ENCODE measurements at regions of chr3 and their contacts with region 1.

Region 1: DNA sequence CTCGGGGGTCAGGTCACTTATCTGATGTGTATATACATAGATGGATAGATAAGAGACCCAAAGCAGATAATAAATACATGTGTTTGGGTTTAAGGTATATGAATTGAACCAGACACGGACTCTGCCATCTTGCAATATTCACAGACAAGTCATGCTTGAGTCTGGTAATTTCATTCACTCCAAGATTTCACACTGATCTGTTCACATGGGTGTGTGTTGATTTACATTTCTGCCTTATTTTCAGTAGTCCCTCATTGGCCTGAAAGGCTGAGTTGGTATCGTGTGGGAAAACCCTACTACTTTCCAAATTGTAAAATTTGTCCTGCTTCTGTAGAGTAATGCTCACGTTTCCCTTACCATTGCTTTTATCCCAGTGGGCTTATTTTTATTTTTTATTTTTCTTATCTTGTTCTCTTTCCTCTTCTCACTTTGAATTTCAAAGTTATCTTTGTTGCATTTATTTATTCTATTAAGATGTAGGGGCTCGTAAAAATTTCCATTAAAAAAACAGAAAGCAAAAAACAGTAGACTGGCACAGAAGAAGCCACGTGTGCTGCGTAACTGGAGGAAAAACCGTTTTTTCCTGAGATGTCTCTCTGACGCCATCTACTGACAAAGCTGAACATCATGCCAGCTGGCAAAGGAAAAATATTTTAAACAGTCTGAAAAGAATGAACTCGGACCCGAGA is 10.8 kb upstream of the MFSD1 start:
- DNase-seq: no peak
- H3K4me3 ChIP-seq: no peak overlapping the region
- H3K27ac ChIP-seq: no peak overlapping the region
- H3K4me1 ChIP-seq: peaks cover 4% of the 10 kb centered on the region
- H3K27me3 ChIP-seq: no peaks in the 10 kb centered on the region
- CTCF ChIP-seq: peak; percentile 59 to 80 (median 74)
- POLR2A ChIP-seq: no peak

Region 2: DNA sequence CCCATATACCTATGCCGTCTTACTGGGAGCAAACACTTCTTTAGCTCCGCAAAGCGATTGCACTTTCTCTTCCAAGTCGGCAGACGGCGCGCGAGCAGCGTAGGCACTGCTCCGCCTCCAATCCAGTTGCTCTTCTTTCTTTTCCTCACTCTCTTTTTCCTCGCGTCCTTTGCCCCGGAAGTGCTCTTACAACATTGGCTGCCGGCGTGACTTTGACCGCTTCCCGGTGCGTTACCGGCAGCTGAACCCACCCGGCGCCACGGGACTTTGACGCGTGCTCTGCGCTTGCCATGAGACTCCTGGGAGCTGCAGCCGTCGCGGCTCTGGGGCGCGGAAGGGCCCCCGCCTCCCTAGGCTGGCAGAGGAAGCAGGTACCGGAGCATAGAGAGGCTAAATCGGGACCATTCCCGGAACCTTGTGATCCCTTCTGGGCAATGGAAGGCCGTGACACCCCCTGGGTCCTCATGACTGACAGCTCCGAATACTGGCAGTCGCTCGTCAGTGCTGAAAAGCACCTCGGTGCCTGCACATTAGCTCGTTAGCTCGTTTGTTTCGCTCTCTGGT is 146.6 kb before region 1 on chr3 and contains the start of gene GFM1:
- intact Hi-C with region 1: no loop called
- DNase-seq: peak; percentile 93
- H3K4me3 ChIP-seq: peak within 1 kb of the TSS; percentile 62 to 80
- H3K27ac ChIP-seq: peak within 1 kb of the TSS; percentile 67 to 71
- H3K4me1 ChIP-seq: no peaks in the 10 kb centered on the region
- H3K27me3 ChIP-seq: no peaks in the 10 kb centered on the region
- CTCF ChIP-seq: peak; percentile 56 to 90 (median 86)
- POLR2A ChIP-seq: no peak
- total RNA-seq, gene GFM1: 54.1 to 68.9 TPM

Region 3: DNA sequence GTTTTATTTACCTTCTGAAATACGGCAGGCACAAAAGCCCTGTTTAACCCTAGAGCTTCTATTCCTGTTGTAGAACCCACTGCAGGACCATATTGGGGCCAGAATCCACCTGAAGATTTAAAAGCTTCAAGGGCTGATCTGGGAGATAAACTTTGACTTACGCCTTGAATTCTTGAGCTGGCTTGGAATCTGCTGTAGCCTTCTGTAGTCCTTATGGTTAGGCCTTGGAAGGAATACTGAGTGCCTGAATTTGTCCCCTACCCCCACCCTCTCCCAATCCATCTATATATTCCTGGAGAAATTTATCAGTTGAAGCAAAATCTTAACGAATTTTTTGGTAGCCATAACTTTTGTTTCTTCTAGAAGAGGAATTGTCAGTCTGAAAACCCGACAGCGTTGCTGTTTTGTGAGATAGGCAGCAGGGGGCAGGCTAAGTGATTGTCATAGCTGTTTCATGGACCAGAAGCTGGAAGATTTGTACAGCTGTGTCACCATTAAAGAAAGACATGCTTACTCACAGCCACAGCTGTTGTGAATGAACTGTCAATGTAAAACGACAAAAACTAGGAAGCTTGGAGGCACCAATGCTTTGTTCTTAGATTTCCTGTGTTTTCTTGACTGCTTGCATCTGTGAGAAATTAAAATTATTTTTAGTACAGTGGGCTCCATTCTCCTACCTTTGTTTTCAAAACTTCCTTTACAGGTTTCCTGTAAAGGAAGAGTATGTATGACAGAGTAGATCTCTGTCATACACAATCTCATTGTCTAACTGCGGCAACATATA is 131.4 kb before region 1 on chr3:
- intact Hi-C with region 1: loop called (anchors 2 kb)
- DNase-seq: peak; percentile 50
- H3K4me3 ChIP-seq: no peak overlapping the region
- H3K27ac ChIP-seq: peak overlapping the region in 1 of 2 donors; percentile 32
- H3K4me1 ChIP-seq: no peaks in the 10 kb centered on the region
- H3K27me3 ChIP-seq: no peaks in the 10 kb centered on the region
- CTCF ChIP-seq: peak; percentile 14 to 70 (median 66)
- POLR2A ChIP-seq: no peak

Measured in prostate gland (tissue), 2 donors.